Mammary epithelial cell (primary cell): ENCODE measurements at regions of chr5 and their contacts with region 1.

Region 1: DNA sequence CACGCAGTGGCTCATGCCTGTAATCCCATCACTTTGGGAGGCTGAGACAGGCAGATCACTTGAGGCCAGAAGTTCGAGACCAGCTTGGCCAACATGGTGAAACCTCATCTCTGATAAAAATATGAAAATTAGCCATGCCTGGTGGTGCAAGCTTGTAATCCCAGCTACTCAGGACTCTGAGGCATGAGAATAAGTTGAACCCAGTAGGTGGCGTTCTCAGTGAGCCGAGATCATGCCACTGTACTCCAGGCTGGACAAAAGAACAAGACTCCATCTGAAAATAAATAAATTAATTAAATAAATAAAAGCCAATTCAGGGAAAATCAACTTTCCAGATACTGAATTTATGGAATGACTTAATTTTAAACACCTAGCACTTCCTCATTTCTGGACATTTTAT is 1722.1 kb downstream of the MAT2B start:
- DNase-seq: no peak
- H3K4me3 ChIP-seq: no peak overlapping the region
- H3K27ac ChIP-seq: no peak overlapping the region
- H3K4me1 ChIP-seq: no peaks in the 10 kb centered on the region
- H3K27me3 ChIP-seq: peaks cover 2% of the 10 kb centered on the region
- CTCF ChIP-seq: peak; percentile 6 to 42

Region 2: DNA sequence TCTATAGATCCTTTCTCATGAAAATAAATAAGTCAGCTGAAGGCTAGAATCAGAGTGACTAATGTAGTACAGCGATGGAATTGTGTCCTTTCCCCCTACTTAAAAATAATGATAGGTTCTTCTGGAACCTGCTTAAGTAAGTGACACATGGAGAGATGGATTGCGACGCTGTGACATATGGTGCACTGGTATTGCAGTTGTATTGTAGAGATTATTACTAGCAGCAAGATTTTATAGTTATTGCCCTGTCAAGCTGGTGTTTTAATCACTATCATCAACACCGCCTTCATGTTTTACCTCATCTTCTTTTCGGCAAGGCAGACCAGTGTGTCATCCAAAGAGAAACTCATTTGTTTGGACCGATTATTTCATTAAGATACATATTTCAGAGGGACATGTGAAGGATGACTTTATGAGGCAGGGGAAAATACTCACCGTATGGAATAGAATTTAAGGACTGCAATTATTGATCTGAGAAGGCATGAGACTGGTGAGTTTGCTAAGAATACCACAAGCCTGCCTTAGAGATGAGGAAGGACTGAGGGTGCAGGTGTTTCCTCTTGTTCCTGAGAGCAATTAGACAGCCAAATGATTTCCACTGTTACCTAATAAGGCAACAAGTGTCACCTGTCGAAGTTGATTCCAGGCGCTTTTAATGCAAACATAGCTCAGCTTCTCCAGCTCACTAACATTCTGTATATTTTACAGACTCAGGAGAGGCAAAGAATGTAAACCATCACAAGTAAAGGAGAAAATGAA is 133.5 kb after region 1 on chr5:
- CTCF ChIA-PET with region 1: interaction called, 18 read pairs
- dilution Hi-C with region 1: no loop called
- in situ Hi-C with region 1: no loop called
- intact Hi-C with region 1: loop called (anchors 2 kb)
- DNase-seq: no peak
- H3K4me3 ChIP-seq: no peak overlapping the region
- H3K27ac ChIP-seq: no peak overlapping the region
- H3K4me1 ChIP-seq: no peaks in the 10 kb centered on the region
- H3K27me3 ChIP-seq: no peaks in the 10 kb centered on the region
- CTCF ChIP-seq: no peak